ENCODE measurements at regions of chr11 and their contacts with region 1.

Region 1: GRCh38 chr11:125625630-125626287 is 796 bp downstream of the CHEK1 start:
- DNase-seq: peak; percentile 87
- ATAC-seq: peak; percentile 95 to 98 (median 97)
- H3K4me3 ChIP-seq: peak overlapping the region; percentile 32 to 95 (median 70)
- H3K27ac ChIP-seq: peak overlapping the region; percentile 91 to 99 (median 96)
- H3K4me1 ChIP-seq: peaks cover 0 to 28% (median 20%) of the 10 kb centered on the region in 9 donors
- H3K27me3 ChIP-seq: no peaks in the 10 kb centered on the region
- CTCF ChIP-seq: peak in 2 of 9 donors; percentile 2 to 17

Region 2: GRCh38 chr11:125494974-125495725 is 130.6 kb before region 1 on chr11:
- intact Hi-C with region 1: loop called in 1 of 10 experiments (anchors 5 kb)
- DNase-seq: peak; percentile 12 to 37
- ATAC-seq: peak; percentile 57 to 82 (median 70)
- H3K4me3 ChIP-seq: peak overlapping the region; percentile 34 to 82 (median 68)
- H3K27ac ChIP-seq: peak overlapping the region in 7 of 10 donors; percentile 38 to 80 (median 73)
- H3K4me1 ChIP-seq: peaks cover 0 to 20% (median 11%) of the 10 kb centered on the region in 9 donors
- H3K27me3 ChIP-seq: peaks cover 0 to 63% (median 3%) of the 10 kb centered on the region in 7 donors
- CTCF ChIP-seq: no peak

Region 3: DNA sequence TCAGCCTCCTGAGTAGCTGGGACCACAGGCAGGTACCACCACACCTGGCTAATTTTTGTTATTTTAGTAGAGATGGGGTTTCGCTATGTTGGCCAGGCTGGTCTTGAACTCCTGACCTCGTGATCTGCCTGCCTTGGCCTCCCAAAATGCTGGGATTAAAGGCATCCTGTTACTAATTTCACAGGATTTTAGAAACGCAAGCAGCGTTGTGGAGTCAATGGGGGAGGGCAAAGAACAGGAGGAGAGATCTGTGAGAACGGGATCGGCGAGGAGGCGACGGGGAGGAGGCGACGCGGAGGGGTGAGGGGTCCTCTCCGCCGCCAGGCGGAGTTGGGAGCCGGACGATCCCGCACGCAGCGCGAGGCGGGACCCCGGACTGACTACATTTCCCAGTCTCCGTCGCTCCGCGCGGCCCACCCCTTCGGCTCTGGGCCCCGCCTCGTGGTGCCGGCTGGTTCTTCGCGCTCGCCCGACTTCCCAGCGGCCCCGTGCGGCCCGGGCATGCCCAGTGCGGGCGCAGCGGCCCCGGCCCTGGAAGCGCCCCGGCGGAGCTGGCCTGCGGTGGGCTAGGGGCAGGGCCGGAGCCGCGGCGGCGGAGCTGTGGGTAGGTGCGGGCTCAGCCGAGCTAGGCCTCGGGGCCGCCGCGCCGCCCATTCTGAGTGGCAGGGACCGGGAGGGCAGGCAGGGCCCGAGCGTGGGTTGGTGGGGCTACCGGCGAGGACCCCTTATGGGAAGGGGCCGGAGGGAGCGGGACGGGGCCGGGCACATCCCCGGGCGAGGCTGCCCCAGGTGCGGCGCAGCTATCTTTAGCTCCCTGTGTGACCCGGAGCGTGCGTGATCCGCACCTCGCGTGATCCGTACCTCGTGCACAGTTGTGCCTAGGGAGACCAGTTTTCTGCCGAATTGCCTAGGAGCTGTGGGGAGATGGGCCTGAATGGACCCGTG is 56.5 kb before region 1 on chr11 and contains the start of gene EI24:
- intact Hi-C with region 1: loop called in 2 of 10 experiments (anchors 5 to 10 kb)
- DNase-seq: peak; percentile 93
- ATAC-seq: peak; percentile 99 to 100 (median 100)
- H3K4me3 ChIP-seq: peak within 1 kb of the TSS; percentile 83 to 98 (median 89)
- H3K27ac ChIP-seq: peak within 1 kb of the TSS in 9 of 10 donors; percentile 78 to 96 (median 91)
- H3K4me1 ChIP-seq: peaks cover 0 to 23% (median 11%) of the 10 kb centered on the region in 9 donors
- H3K27me3 ChIP-seq: no peaks in the 10 kb centered on the region
- CTCF ChIP-seq: peak; percentile 57 to 87 (median 78)
- total RNA-seq, gene EI24: 43.3 to 73.7 (median 51.5) TPM

Region 4: GRCh38 chr11:125592305-125593112 is 33.2 kb before region 1 on chr11 and contains the start of gene STT3A:
- intact Hi-C with region 1: loop called in 1 of 10 experiments (anchors 5 kb)
- DNase-seq: peak; percentile 99 to 100
- ATAC-seq: peak; percentile 98 to 100 (median 99)
- H3K4me3 ChIP-seq: peak within 1 kb of the TSS; percentile 65 to 82 (median 72)
- H3K27ac ChIP-seq: peak within 1 kb of the TSS; percentile 83 to 97 (median 94)
- H3K4me1 ChIP-seq: peaks cover 4 to 38% (median 31%) of the 10 kb centered on the region in 9 donors
- H3K27me3 ChIP-seq: no peaks in the 10 kb centered on the region
- CTCF ChIP-seq: no peak
- total RNA-seq, gene STT3A: 52.1 to 83.9 (median 58.5) TPM

Region 5: GRCh38 chr11:125874556-125875124 is 248.9 kb after region 1 on chr11:
- intact Hi-C with region 1: loop called in 4 of 10 experiments (anchors 5 to 10 kb)
- DNase-seq: peak in 1 of 2 donors; percentile 67
- ATAC-seq: peak; percentile 67 to 95 (median 92)
- H3K4me3 ChIP-seq: peak overlapping the region in 6 of 10 donors; percentile 12 to 42 (median 22)
- H3K27ac ChIP-seq: no peak overlapping the region
- H3K4me1 ChIP-seq: peaks cover 0 to 4% (median 0%) of the 10 kb centered on the region in 9 donors
- H3K27me3 ChIP-seq: no peaks in the 10 kb centered on the region
- CTCF ChIP-seq: peak; percentile 51 to 85 (median 75)

Region 6: GRCh38 chr11:125887373-125888324 is 261.9 kb after region 1 on chr11 and contains the start of gene HYLS1:
- intact Hi-C with region 1: loop called in 3 of 10 experiments (anchors 5 to 10 kb)
- DNase-seq: peak; percentile 94 to 95
- ATAC-seq: peak; percentile 98 to 100 (median 99)
- H3K4me3 ChIP-seq: peak within 1 kb of the TSS; percentile 57 to 89 (median 81)
- H3K27ac ChIP-seq: peak within 1 kb of the TSS; percentile 91 to 98 (median 94)
- H3K4me1 ChIP-seq: peaks cover 0 to 30% (median 11%) of the 10 kb centered on the region in 9 donors
- H3K27me3 ChIP-seq: no peaks in the 10 kb centered on the region
- CTCF ChIP-seq: peak in 6 of 9 donors; percentile 13 to 60 (median 46)
- total RNA-seq, gene HYLS1: 2.0 to 6.4 (median 3.8) TPM

Region 7: GRCh38 chr11:126205359-126205758 is 579.6 kb after region 1 on chr11:
- intact Hi-C with region 1: loop called in 1 of 10 experiments (anchors 5 kb)
- DNase-seq: no peak
- ATAC-seq: no peak
- H3K4me3 ChIP-seq: no peak overlapping the region
- H3K27ac ChIP-seq: peak overlapping the region in 1 of 10 donors; percentile 15
- H3K4me1 ChIP-seq: peaks cover 0 to 38% (median 18%) of the 10 kb centered on the region in 9 donors
- H3K27me3 ChIP-seq: no peaks in the 10 kb centered on the region
- CTCF ChIP-seq: no peak